ENCODE measurements at regions of chr10 and their contacts with region 1.

Region 1: DNA sequence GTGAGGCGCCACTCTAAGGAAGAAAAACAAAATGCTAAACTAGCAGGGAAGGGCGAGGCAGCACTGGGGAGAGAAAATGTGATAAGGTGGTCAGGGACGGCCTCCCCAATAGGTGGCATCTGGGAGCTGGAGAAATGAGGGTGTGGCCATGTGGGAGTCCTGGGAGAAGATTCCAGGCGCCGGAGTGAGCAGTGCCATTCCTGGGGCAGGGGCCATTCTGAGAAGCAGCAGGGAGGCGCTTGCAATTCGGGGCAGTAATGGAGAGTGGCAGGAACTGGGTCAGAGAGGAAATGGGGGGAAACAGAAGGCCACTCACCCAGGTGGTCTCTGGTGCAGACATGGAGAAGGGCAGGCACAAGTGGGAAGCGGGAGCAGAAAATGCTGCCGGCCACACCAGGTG is 61.8 kb upstream of the LRRC18 start:
- DNase-seq: peak in 1 of 2 donors; percentile 28
- ATAC-seq: peak; percentile 37 to 90 (median 78)
- H3K4me3 ChIP-seq: no peak overlapping the region
- H3K27ac ChIP-seq: peak overlapping the region in 9 of 10 donors; percentile 2 to 82 (median 70)
- H3K4me1 ChIP-seq: peaks cover 4 to 27% (median 14%) of the 10 kb centered on the region in 9 donors
- H3K27me3 ChIP-seq: no peaks in the 10 kb centered on the region
- CTCF ChIP-seq: peak in 6 of 9 donors; percentile 11 to 43 (median 30)

Region 2: GRCh38 chr10:48872234-48872633 is 129.2 kb before region 1 on chr10:
- intact Hi-C with region 1: no loop called
- DNase-seq: no peak
- ATAC-seq: no peak
- H3K4me3 ChIP-seq: no peak overlapping the region
- H3K27ac ChIP-seq: no peak overlapping the region
- H3K4me1 ChIP-seq: no peaks in the 10 kb centered on the region
- H3K27me3 ChIP-seq: no peaks in the 10 kb centered on the region
- CTCF ChIP-seq: no peak

Region 3: DNA sequence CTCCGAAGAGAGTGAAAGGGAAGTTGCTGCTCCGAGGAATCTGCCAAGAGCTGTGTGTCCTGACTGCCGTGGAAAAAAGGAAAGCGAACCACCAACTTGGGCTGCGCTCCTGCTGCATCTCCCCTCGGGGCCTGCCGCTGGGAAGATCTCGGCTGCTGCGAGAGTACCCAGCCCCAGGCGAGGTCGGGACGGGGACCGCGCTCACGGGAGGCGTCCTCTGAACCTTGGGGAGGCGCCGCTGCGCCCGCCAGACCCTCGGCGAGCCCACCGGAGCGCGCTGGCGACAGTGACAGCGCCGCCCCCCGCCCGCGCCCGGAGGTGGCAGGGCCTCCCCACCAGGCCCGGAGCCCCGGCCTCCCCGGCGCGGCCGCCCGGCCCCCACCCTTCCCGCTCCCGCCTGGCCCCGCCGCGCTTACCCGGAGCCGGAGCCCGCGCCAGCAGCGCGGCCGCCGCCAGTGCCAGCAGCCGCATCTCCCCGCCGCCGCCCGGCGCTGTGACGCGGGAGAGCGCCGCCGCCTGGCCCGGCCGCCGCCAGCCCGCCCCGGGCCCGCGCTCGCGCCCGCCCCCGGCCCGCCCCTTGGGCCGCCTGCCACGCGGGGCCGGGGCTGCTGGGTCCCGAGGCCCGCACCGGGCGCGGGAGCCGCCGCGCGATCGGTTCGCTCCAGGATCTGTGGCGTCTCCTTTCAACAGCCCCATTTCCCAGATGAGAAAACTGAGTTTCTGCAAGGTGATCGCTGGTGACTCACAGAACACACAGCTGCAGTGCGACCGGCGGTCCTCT is 113.8 kb after region 1 on chr10 and contains the start of gene VSTM4:
- intact Hi-C with region 1: loop called in 3 of 10 experiments (anchors 5 to 10 kb)
- DNase-seq: peak; percentile 41 to 68
- ATAC-seq: peak; percentile 22 to 73 (median 51)
- H3K4me3 ChIP-seq: peak within 1 kb of the TSS; percentile 11 to 79 (median 66)
- H3K27ac ChIP-seq: peak within 1 kb of the TSS in 9 of 10 donors; percentile 74 to 89 (median 87)
- H3K4me1 ChIP-seq: peaks cover 3 to 60% (median 45%) of the 10 kb centered on the region in 9 donors
- H3K27me3 ChIP-seq: peaks cover 0 to 12% (median 0%) of the 10 kb centered on the region in 7 donors
- CTCF ChIP-seq: peak in 4 of 9 donors; percentile 18 to 36 (median 23)
- total RNA-seq, gene VSTM4: 12.0 to 26.7 (median 18.1) TPM

Region 4: DNA sequence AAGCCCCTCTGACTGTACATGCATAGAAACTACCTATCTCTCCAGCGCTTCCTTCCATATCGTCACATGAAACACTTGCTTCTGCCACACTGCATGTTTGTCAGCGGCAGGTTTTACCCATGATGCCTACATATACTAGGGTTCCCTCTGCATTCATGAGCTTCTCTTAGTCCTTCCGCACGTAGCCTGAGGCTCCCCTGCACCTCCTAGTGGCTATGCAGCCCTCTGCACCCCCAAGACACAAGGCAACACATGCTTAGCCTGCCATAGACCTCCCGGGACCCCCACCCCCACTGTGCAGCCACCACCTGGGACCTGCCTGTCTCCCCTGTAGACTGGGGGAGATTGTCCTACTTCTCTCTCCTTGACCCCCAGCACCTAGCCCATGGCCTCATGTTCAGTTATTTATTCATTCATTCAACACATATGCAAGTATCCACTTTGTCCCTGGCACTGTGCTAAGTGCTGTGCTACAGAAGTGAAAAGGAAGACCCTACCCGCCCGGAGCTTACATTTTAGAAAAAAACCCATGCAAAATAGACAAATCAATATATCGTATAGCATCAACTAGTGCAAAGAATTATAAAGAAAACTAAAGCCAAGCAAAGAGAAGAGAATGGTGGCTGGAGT is 163.3 kb after region 1 on chr10:
- intact Hi-C with region 1: loop called in 1 of 10 experiments (anchors 5 kb)
- DNase-seq: peak in 1 of 2 donors; percentile 34
- ATAC-seq: peak in 6 of 8 donors; percentile 27 to 73 (median 62)
- H3K4me3 ChIP-seq: no peak overlapping the region
- H3K27ac ChIP-seq: no peak overlapping the region
- H3K4me1 ChIP-seq: peaks cover 0 to 40% (median 13%) of the 10 kb centered on the region in 9 donors
- H3K27me3 ChIP-seq: no peaks in the 10 kb centered on the region
- CTCF ChIP-seq: peak; percentile 33 to 76 (median 66)

Measured in heart right ventricle (tissue), 16 donors.